Aorta (tissue), 5 donors: ENCODE measurements at regions of chr14 and their contacts with region 1.

Region 1: GRCh38 chr14:90383075-90383730 is 13.6 kb upstream of the CALM1 start:
- DNase-seq: peak; percentile 100
- ATAC-seq: peak; percentile 99
- H3K4me3 ChIP-seq: peak overlapping the region; percentile 53 to 80
- H3K27ac ChIP-seq: peak overlapping the region; percentile 98 to 100
- H3K4me1 ChIP-seq: peaks cover 0 to 4% of the 10 kb centered on the region in 2 donors
- H3K27me3 ChIP-seq: no peaks in the 10 kb centered on the region

Region 2: GRCh38 chr14:90331497-90332435 is 51.4 kb before region 1 on chr14 and contains the start of gene NRDE2:
- intact Hi-C with region 1: loop called (anchors 2 to 5 kb)
- DNase-seq: peak; percentile 100
- ATAC-seq: peak; percentile 100
- H3K4me3 ChIP-seq: peak within 1 kb of the TSS; percentile 12 to 46
- H3K27ac ChIP-seq: peak within 1 kb of the TSS in 1 of 2 donors; percentile 34
- H3K4me1 ChIP-seq: peaks cover 0 to 2% of the 10 kb centered on the region in 2 donors
- H3K27me3 ChIP-seq: no peaks in the 10 kb centered on the region
- total RNA-seq, gene NRDE2: 20.4 to 28.5 TPM

Region 3: DNA sequence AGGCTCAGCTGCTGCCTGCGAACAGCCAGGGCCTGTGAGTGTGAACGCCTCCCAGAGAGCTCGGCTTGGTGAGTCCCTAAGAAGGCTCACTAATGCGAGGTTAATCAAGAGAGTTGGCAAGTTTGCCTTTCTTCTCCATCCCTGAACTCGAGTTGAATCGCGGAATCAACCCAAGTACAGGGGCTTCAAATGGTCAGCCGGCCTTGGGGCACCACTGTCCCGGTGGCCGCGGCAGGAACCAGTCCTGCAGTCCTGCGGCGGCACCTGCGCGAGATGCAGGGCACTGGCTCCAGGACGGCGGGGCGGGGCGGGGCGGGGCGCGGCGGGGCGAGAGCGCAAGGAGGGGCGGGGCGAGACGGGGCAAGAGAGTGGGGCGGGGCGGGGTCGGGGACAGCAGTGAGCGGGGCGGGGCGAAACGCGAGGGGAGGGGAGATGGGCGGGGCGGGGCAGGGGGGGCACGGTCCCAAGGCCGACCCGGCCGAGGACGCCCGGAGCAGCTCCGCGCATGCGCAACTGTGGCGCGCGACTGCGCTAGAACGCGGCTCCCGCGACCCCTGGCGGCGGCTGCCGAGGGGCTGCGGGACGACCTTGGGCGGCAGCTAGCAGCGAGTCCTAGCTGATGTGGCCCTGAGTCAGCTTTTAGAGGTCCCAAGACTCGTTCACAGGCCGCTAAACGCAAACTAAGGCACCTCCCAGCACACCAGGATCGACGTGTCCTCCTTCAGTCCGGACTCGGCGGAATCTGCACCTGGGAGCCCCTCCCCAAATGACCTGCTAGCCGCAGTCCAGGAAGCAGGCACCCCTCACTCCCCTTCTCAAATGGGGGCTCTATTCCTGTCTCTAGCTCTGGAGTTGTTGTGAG is 375.1 kb after region 1 on chr14:
- intact Hi-C with region 1: loop called in 1 of 2 experiments (anchors 10 kb)
- DNase-seq: peak; percentile 94 to 98
- ATAC-seq: peak; percentile 95
- H3K4me3 ChIP-seq: peak overlapping the region in 1 of 2 donors; percentile 56
- H3K27ac ChIP-seq: peak overlapping the region; percentile 89 to 92
- H3K4me1 ChIP-seq: peaks cover 1 to 4% of the 10 kb centered on the region in 2 donors
- H3K27me3 ChIP-seq: no peaks in the 10 kb centered on the region